AG04449 (cell line): ENCODE measurements at regions of chr9 and their contacts with region 1.

Region 1: GRCh38 chr9:20670395-20670794 is 13.7 kb upstream of the FOCAD start:
- DNase-seq: no peak
- H3K4me3 ChIP-seq: no peak overlapping the region
- CTCF ChIP-seq: no peak

Region 2: DNA sequence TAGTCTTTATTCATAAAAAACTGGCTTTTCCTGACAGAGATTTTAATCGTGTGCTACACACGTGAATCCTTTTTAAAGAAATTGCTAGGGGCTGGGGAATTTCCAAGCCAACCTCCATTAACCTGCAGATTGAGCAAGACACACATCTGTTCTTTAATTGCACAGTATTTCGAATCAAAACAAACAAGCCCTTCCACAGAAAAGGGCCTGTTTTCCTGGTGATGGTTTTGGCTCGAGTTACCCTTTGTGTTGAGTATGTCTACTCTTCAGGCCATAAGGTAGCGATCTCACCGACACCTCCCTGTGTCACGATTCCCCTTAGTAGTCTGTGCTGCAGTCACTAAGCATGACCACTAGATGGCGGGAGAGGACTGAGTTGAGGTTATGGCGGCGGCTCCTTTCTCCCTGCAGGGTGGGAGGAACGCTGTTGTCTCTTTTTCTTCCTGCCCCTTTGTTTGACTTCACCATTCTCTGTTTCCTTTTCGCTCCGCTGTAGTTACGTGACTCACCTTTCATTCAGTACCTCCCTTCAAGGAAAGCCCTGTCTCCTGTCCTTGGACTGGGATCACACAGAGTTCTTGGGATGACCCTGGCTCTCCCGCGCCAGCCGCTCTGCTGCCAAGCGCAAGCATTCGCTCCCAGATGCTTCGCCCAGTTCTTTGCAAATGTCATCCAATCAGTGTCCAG is 744.4 kb before region 1 on chr9:
- CTCF ChIA-PET with region 1: no interaction called
- POLR2A ChIA-PET with region 1: no interaction called
- DNase-seq: peak; percentile 4
- H3K4me3 ChIP-seq: peak overlapping the region; percentile 61
- CTCF ChIP-seq: peak; percentile 98

Region 3: GRCh38 chr9:20684035-20684872 is 13.9 kb after region 1 on chr9 and contains the start of gene FOCAD:
- CTCF ChIA-PET with region 1: interaction called, 11 read pairs
- POLR2A ChIA-PET with region 1: interaction called, 5 read pairs
- DNase-seq: peak; percentile 42
- H3K4me3 ChIP-seq: peak within 1 kb of the TSS; percentile 80
- CTCF ChIP-seq: no peak